ENCODE measurements at regions of chr15 and their contacts with region 1.

Region 1: DNA sequence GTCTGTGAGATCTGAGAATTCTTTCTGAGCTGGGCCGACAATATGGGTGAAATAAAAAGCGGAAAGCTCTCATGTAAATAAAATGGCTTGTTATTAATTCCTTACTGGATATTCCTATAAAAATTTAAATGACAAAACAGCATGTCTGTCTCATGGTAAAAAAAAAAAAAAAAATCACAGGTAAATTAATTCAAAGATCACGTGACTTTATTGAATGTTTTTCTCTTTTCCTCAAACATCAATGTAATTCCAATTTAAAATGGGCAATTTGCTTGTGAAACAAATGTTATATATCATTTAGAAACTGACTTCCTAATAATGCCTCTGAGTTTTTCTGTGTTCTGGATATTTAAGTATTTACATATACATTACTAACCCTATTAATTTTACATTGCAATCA is 280.3 kb downstream of the NR2F2 start:
- DNase-seq: no peak
- H3K4me3 ChIP-seq: no peak overlapping the region
- H3K27ac ChIP-seq: no peak overlapping the region
- H3K4me1 ChIP-seq: no peaks in the 10 kb centered on the region
- H3K27me3 ChIP-seq: peaks cover 20% of the 10 kb centered on the region
- CTCF ChIP-seq: no peak

Region 2: DNA sequence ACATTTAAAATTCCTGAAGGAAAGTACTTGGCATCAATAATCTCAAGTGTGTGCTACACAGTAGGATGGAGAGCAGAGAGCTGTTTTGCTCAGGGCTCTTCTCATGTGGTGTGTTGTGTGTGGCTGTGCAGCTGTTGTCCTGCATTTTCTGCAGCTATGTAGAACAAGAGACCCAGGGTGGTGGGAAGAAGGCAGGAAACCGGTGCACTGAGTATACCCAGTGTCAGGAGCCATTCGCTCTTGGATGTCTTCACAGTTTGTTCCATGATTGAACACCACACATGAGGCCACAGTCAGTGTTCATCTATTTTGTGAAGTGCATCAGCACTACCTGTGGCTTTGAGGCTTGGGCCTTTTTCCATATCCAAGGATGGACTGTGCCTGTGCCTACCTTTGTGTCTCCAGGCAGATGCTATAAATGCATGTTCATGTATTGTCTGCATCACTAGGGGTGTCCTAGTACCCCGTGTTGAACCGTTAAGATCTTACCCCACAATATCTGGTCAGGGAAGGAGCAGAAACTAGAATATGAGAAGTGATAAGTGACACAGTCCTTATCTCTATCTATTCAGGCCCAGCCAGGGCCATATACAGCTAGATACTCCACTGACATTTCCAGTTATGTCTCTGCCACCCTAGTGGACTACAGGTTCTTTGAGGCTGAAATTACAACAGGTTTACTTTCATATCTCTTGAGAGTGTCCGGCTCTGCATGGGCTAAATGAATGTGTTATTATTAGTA is 85.9 kb before region 1 on chr15:
- CTCF ChIA-PET with region 1: no interaction called
- POLR2A ChIA-PET with region 1: no interaction called
- intact Hi-C with region 1: no loop called
- DNase-seq: no peak
- H3K4me3 ChIP-seq: no peak overlapping the region
- H3K27ac ChIP-seq: no peak overlapping the region
- H3K4me1 ChIP-seq: no peaks in the 10 kb centered on the region
- H3K27me3 ChIP-seq: peaks cover 20% of the 10 kb centered on the region
- CTCF ChIP-seq: no peak

Region 3: DNA sequence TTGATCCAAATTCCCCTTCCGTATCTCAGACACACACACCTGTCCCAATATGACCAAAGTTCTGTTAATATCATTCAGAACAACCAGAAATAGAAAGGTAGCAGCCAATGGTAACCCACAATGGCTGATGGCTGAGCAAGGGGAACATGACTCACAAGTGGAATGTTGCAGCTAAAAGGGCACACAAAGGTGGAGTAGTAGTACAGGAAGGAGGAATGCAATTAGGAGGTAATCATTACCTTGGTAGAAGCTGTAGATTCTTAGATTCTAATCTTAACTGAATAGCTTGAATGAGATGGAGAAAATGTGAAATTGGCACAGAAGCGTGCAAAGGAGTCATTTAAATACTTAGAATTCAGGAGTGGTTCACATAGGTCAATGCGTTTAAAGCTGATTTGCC is 67.6 kb after region 1 on chr15:
- CTCF ChIA-PET with region 1: no interaction called
- POLR2A ChIA-PET with region 1: interaction called, 22 read pairs
- intact Hi-C with region 1: no loop called
- DNase-seq: no peak
- H3K4me3 ChIP-seq: no peak overlapping the region
- H3K27ac ChIP-seq: no peak overlapping the region
- H3K4me1 ChIP-seq: no peaks in the 10 kb centered on the region
- H3K27me3 ChIP-seq: no peaks in the 10 kb centered on the region
- CTCF ChIP-seq: no peak

Measured in PC-9 (cell line).